ENCODE measurements at regions of chr11 and their contacts with region 1.

Region 1: DNA sequence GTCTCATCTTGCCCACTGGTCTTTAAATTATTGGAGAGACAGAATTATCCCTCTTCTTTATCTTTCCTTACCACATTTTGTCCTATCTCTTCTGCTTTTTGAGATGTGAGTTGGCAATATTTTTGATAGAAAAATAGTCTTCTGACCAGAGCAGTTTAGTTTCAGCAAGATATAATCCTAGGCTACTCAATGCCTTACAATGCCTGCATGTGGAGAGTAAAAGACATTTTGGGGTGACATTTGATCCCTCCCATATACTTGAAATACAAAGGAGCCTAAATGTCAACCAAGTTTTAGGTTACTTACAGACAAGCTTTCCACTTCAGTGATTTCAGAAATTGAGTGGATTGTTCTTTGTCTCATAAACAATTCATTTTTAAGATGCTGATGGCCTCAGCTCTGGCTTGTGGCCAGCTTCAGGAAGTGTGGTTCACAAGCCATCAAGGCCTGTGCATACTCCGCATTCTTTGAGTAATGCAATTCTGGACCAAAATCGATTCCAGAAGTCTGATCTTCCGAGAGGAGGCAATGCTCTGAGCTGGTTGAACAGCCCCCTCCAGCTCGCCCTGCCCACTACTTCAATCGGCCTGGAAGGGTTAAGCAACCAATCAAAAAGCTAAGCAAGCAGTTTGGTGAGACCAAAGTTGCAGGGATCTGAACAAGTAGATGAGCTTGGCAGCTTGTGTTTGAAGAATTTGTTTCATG is 274.4 kb downstream of the BLID start:
- DNase-seq: peak; percentile 79
- H3K4me3 ChIP-seq: no peak overlapping the region
- H3K27ac ChIP-seq: no peak overlapping the region
- H3K4me1 ChIP-seq: peaks cover 6% of the 10 kb centered on the region
- H3K27me3 ChIP-seq: no peaks in the 10 kb centered on the region
- CTCF ChIP-seq: no peak
- POLR2A ChIP-seq: no peak

Region 2: DNA sequence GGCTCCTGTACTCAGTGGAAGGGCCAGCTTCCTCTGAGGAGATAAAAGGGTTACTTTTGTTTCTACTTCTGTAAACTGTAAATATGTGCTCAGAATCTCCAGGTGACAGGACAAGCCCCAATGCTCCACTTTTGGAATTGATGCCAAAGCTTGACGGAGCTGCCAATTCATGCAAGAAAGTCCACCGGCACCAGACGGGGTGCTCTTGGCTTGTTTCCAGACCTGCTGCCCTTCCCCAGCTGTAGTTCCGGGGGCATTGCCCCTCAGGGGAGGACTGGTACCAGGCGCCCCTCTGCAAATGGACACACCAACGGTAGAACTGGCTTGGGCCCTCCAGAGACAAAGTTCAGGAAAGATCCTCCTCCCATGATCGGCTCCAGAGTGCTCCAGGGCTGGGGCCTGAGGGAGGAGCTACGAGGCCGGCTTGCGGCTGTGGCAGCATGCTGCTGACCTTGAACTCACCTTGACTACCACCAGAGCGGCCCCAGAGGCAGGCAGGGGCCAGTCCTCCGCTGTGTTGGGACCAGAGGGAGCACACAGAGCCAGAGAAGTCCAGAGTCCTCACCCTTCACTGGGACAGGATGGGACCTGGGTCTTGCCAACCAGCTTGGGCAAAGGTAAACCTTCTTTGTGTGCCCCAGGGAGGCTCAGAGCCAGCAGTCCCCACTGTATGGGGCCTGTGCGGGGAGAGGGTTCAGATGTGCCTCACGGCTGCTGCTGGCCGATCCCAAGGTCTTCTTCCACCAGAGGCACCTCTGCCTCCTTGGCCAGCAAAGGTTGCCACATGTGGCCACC is 1648.6 kb before region 1 on chr11:
- CTCF ChIA-PET with region 1: no interaction called
- POLR2A ChIA-PET with region 1: no interaction called
- dilution Hi-C with region 1: no loop called
- intact Hi-C with region 1: loop called (anchors 5 kb)
- DNase-seq: no peak
- H3K4me3 ChIP-seq: no peak overlapping the region
- H3K27ac ChIP-seq: no peak overlapping the region
- H3K4me1 ChIP-seq: no peaks in the 10 kb centered on the region
- H3K27me3 ChIP-seq: peaks cover 8 to 14% of the 10 kb centered on the region in 2 experiments
- CTCF ChIP-seq: no peak
- POLR2A ChIP-seq: no peak

Region 3: GRCh38 chr11:121696177-121696871 is 145.3 kb before region 1 on chr11:
- CTCF ChIA-PET with region 1: no interaction called
- POLR2A ChIA-PET with region 1: no interaction called
- dilution Hi-C with region 1: no loop called
- intact Hi-C with region 1: no loop called
- DNase-seq: no peak
- H3K4me3 ChIP-seq: no peak overlapping the region
- H3K27ac ChIP-seq: no peak overlapping the region
- H3K4me1 ChIP-seq: no peaks in the 10 kb centered on the region
- H3K27me3 ChIP-seq: peaks cover 2 to 6% of the 10 kb centered on the region in 2 experiments
- CTCF ChIP-seq: no peak
- POLR2A ChIP-seq: no peak

Region 4: GRCh38 chr11:121777056-121777455 is 64.6 kb before region 1 on chr11:
- CTCF ChIA-PET with region 1: no interaction called
- POLR2A ChIA-PET with region 1: no interaction called
- dilution Hi-C with region 1: no loop called
- intact Hi-C with region 1: no loop called
- DNase-seq: peak; percentile 12
- H3K4me3 ChIP-seq: no peak overlapping the region
- H3K27ac ChIP-seq: no peak overlapping the region
- H3K4me1 ChIP-seq: no peaks in the 10 kb centered on the region
- H3K27me3 ChIP-seq: no peaks in the 10 kb centered on the region
- CTCF ChIP-seq: no peak
- POLR2A ChIP-seq: no peak

Region 5: DNA sequence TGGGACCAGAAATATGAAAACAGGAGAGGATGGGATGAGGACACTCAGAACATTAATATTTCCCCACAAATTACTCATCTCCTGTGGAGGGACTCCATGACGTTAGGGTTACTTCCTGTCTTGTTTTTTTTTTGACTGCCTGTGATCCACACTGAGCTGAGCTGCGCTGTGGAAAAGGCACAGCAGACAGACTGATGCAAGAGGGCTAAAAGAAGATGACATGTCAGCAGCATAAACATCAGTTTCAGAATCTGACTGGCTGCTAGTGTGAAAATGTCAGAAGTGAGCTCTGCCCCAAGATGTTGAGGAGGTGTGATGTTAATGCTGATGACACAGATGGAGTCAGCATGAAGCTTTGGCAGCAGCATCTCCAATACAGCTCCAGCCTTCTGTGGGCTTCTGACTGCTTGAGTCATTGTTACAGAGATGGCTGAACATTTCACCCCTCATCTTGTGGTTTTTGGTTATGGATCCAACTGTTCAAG is 12.4 kb before region 1 on chr11:
- CTCF ChIA-PET with region 1: interaction called, 6 read pairs
- POLR2A ChIA-PET with region 1: interaction called, 3 read pairs
- dilution Hi-C with region 1: no loop called
- intact Hi-C with region 1: loop called (anchors 1 kb)
- DNase-seq: peak; percentile 87
- H3K4me3 ChIP-seq: no peak overlapping the region
- H3K27ac ChIP-seq: peak overlapping the region; percentile 81
- H3K4me1 ChIP-seq: peaks cover 26% of the 10 kb centered on the region
- H3K27me3 ChIP-seq: no peaks in the 10 kb centered on the region
- CTCF ChIP-seq: no peak
- POLR2A ChIP-seq: peak; percentile 49

Measured in endothelial cell of umbilical vein (primary cell).